SK-N-SH (cell line): ENCODE measurements at regions of chr3 and their contacts with region 1.

Region 1: GRCh38 chr3:73056014-73056844 is 5.2 kb upstream of the EBLN2 start:
- DNase-seq: peak; percentile 42
- H3K4me3 ChIP-seq: no peak overlapping the region; a peak in 1 of 4 replicates
- H3K27ac ChIP-seq: peak overlapping the region in 1 of 2 experiments; percentile 54; a peak in 1 of 4 replicates
- H3K4me1 ChIP-seq: peaks cover 5 to 12% of the 10 kb centered on the region in 2 experiments; a peak in 3 of 4 replicates
- H3K27me3 ChIP-seq: no peaks in the 10 kb centered on the region
- CTCF ChIP-seq: peak; percentile 71
- EP300 ChIP-seq: no peak
- RAD21 ChIP-seq: peak; percentile 81

Region 2: DNA sequence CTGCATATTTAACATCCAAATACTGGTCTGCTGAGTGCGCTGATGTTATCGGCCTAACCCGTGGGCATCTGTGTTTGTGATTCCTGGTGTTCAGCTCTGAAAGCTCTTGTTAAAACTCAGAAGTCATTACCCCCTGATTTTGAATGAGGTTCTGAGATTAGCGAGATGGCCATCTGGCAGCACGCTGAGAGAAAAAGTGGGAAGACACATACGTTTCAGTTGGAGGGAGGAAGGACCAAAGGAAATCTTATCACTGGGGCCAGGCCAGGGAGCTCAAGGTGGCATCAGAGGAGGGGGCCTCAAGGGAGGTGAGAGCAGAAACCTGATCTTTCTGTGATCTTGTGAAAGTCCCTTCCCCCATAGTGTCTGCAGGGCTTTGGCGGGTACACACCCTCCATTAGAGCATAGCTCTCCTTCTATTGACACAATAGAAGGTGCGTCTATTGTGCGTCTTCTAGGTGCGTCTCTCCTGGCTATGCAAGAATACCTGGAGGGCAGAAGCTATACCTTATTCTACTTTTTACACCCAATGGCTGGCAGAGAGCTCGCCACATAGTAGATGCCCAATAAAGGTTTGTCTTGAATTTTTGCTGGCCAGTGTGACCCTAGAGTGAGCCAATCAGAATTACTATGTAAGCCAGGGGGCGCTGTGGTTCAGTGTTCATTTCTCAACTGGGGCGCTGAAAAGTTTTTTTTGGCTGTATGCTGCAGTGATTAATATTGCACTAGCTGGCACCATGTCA is 390.4 kb before region 1 on chr3:
- CTCF ChIA-PET with region 1: interaction called, 10 read pairs
- POLR2A ChIA-PET with region 1: no interaction called
- DNase-seq: peak; percentile 82
- H3K4me3 ChIP-seq: no peak overlapping the region; a peak in 1 of 4 replicates
- H3K27ac ChIP-seq: peak overlapping the region in 1 of 2 experiments; percentile 98; a peak in 2 of 4 replicates
- H3K4me1 ChIP-seq: peaks cover 0 to 35% of the 10 kb centered on the region in 2 experiments; a peak in 2 of 4 replicates
- H3K27me3 ChIP-seq: no peaks in the 10 kb centered on the region
- CTCF ChIP-seq: peak; percentile 68
- EP300 ChIP-seq: peak in 1 of 2 experiments; percentile 99; a peak in 2 of 4 replicates
- RAD21 ChIP-seq: peak; percentile 81

Region 3: GRCh38 chr3:72924055-72924454 is 132.2 kb before region 1 on chr3:
- CTCF ChIA-PET with region 1: interaction called, 10 read pairs
- POLR2A ChIA-PET with region 1: no interaction called
- DNase-seq: no peak
- H3K4me3 ChIP-seq: no peak overlapping the region
- H3K27ac ChIP-seq: no peak overlapping the region
- H3K4me1 ChIP-seq: no peaks in the 10 kb centered on the region
- H3K27me3 ChIP-seq: no peaks in the 10 kb centered on the region
- CTCF ChIP-seq: peak; percentile 28; the same call in 1 of the 2 replicates
- EP300 ChIP-seq: no peak
- RAD21 ChIP-seq: no peak

Region 4: GRCh38 chr3:72944696-72945095 is 111.5 kb before region 1 on chr3:
- CTCF ChIA-PET with region 1: interaction called, 69 read pairs
- POLR2A ChIA-PET with region 1: no interaction called
- DNase-seq: no peak
- H3K4me3 ChIP-seq: no peak overlapping the region
- H3K27ac ChIP-seq: peak overlapping the region in 1 of 2 experiments; percentile 84; a peak in 2 of 4 replicates
- H3K4me1 ChIP-seq: no peaks in the 10 kb centered on the region; a peak in 1 of 4 replicates
- H3K27me3 ChIP-seq: no peaks in the 10 kb centered on the region
- CTCF ChIP-seq: no peak
- EP300 ChIP-seq: no peak
- RAD21 ChIP-seq: no peak

Region 5: GRCh38 chr3:72996473-72997333 is 59.5 kb before region 1 on chr3 and contains the start of gene PPP4R2:
- CTCF ChIA-PET with region 1: interaction called, 14 read pairs
- POLR2A ChIA-PET with region 1: no interaction called
- DNase-seq: peak; percentile 94
- H3K4me3 ChIP-seq: peak within 1 kb of the TSS; percentile 78 to 83
- H3K27ac ChIP-seq: peak within 1 kb of the TSS; percentile 90 to 92
- H3K4me1 ChIP-seq: peaks cover 3 to 11% of the 10 kb centered on the region in 2 experiments; a peak in 2 of 4 replicates
- H3K27me3 ChIP-seq: no peaks in the 10 kb centered on the region
- CTCF ChIP-seq: no peak; the same call in 1 of the 2 replicates
- EP300 ChIP-seq: no peak
- RAD21 ChIP-seq: no peak
- polyA plus RNA-seq, gene PPP4R2: 8.9 and 11.3 TPM in 2 replicates

Region 6: DNA sequence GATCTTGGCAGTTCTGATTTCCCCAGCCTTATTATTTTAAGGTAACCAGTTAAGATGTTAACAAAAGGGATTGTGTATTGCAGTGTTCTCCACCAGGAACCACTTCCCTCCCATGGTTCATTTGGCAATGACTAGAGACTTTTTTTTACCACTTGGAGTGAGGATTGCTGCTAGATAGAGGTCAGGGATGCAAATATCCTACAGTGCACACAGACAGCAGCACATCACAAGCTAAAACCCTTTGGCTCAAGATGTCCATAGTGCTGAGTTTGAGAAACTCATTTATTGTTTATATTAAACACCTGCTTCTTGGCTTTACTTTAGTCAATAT is 18.9 kb before region 1 on chr3:
- CTCF ChIA-PET with region 1: interaction called, 18 read pairs
- POLR2A ChIA-PET with region 1: no interaction called
- DNase-seq: no peak
- H3K4me3 ChIP-seq: no peak overlapping the region
- H3K27ac ChIP-seq: peak overlapping the region; percentile 36 to 81; a peak in 3 of 4 replicates
- H3K4me1 ChIP-seq: peaks cover 2 to 10% of the 10 kb centered on the region in 2 experiments; a peak in 3 of 4 replicates
- H3K27me3 ChIP-seq: no peaks in the 10 kb centered on the region
- CTCF ChIP-seq: no peak
- EP300 ChIP-seq: no peak
- RAD21 ChIP-seq: no peak

Region 7: DNA sequence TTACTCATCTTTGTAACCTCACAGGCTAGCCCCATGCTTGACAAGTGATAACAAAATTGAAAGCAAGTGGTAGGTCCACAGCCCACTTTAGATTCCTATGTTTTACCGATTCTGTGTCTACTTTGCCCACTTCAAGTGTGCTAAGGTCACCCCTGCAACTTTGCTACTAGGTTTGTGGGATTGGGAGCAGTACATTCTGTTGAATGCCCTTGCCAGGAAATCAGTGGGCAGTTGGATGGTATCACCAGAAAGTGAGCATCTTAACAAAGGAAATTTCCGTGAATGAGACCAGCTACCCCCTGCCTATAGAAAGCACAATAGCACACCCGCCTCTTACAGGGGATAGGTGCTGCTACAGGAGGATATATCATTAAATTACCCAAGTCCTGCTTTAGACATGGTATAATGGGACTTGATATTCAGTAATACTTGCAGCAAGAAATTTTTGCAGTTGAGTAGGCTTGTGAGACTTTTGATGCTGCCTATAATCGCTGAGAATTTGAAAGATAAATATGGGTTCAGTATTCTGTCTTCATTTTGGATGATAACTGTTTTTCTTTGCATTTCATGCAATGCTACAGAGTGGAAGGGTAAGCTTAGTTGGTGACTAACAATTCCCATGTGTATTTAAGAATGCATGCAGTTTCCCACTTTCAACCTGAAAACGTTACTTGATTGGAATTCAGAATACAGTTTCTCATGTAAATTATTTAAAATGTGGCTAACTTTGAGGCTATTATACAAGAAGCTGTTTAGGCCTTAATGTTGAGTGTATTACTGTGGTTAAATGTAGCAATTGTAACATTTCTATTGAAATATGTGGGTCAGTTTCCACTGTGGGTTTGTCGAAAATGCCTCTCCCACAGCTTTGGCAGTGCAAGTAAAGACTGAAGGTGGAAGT is 14.7 kb after region 1 on chr3:
- CTCF ChIA-PET with region 1: interaction called, 16 read pairs
- POLR2A ChIA-PET with region 1: no interaction called
- DNase-seq: no peak
- H3K4me3 ChIP-seq: no peak overlapping the region
- H3K27ac ChIP-seq: no peak overlapping the region; a peak in 2 of 4 replicates
- H3K4me1 ChIP-seq: no peaks in the 10 kb centered on the region; a peak in 1 of 4 replicates
- H3K27me3 ChIP-seq: no peaks in the 10 kb centered on the region
- CTCF ChIP-seq: no peak
- EP300 ChIP-seq: no peak
- RAD21 ChIP-seq: no peak

Region 8: DNA sequence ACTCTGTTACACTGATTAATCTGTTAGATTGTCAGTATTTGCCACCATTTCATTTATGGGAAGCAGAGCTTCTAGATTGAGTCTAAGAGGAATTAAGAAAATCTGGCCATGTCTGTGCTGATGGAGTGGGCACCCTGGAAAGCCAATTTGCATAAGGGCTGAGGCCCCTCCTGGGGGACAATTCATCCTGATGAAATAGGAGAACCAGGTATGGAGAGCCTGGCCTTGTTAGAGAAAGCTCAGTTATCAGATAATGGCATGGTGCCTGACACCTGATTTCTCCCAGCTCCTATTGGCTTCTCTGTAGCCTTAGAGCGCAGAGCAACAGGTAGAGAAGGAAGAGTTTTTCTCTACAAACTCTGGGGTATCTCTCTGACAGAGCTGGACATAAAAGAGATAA is 119.5 kb after region 1 on chr3:
- CTCF ChIA-PET with region 1: no interaction called
- POLR2A ChIA-PET with region 1: no interaction called
- DNase-seq: no peak
- H3K4me3 ChIP-seq: no peak overlapping the region
- H3K27ac ChIP-seq: no peak overlapping the region
- H3K4me1 ChIP-seq: no peaks in the 10 kb centered on the region; a peak in 1 of 4 replicates
- H3K27me3 ChIP-seq: no peaks in the 10 kb centered on the region; the same call in 1 of the 2 replicates
- CTCF ChIP-seq: no peak
- EP300 ChIP-seq: no peak
- RAD21 ChIP-seq: no peak